PC-3 (cell line): ENCODE measurements at regions of chr3 and their contacts with region 1.

Region 1: DNA sequence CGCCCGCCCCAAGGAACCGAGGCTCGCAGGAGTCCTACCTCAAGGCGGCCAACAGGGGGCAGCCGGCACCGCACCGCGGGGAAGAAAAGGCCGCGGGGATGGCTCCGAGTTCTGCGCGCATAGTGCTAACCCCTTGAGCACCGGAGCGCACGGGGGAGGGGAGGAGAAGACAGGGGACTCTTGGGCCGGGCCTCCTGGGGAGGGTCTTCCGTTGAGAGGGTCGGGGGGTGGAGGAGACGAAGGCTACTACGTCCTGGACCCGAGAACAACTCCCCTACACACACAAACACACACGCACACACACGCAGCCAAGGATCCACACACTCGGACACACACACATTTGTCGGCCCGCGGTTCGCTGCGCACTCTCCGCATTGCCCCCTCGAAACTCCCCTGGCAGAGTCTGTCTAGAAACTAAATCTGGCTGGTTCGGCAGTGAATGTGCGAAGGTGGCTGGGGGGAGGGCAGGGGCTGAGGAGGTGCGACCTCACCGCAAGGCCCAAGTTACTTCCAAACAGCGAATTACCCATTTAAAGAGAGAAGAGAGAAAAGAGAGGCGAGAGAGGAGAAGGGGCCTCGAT is 1.8 kb downstream of the WNT5A start:
- DNase-seq: peak; percentile 82
- ATAC-seq: peak; percentile 33
- H3K4me3 ChIP-seq: peak overlapping the region; percentile 90
- H3K27ac ChIP-seq: peak overlapping the region; percentile 84
- H3K4me1 ChIP-seq: peaks cover 24% of the 10 kb centered on the region
- H3K27me3 ChIP-seq: no peaks in the 10 kb centered on the region
- CTCF ChIP-seq: peak; percentile 46

Region 2: DNA sequence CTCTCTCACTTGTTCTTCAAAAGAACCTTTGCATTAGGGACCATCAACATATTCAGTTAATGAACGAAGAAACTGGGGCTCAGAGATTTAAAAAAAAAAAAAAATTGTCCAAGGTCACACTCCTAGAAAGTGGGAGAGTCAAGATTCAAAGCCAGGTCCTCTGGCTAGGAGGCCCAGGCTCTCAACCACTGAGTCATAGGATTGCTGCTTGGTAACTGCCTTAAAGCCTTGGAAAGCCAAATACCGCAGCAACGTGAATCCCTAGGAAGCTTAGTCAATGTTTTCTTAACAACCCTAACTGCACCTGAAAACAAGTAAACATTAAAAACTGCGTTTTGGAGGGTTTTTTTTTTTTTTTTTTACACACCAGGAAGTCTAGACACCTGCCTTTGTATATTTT is 154.9 kb before region 1 on chr3:
- CTCF ChIA-PET with region 1: no interaction called
- POLR2A ChIA-PET with region 1: no interaction called
- intact Hi-C with region 1: loop called (anchors 2 kb)
- DNase-seq: peak; percentile 94
- ATAC-seq: peak; percentile 97
- H3K4me3 ChIP-seq: peak overlapping the region; percentile 17; the same call in 1 of the 2 replicates
- H3K27ac ChIP-seq: peak overlapping the region; percentile 79
- H3K4me1 ChIP-seq: peaks cover 19% of the 10 kb centered on the region
- H3K27me3 ChIP-seq: no peaks in the 10 kb centered on the region
- CTCF ChIP-seq: no peak

Region 3: GRCh38 chr3:55511895-55512570 is 26.7 kb after region 1 on chr3:
- CTCF ChIA-PET with region 1: interaction called, 4 read pairs
- POLR2A ChIA-PET with region 1: no interaction called
- intact Hi-C with region 1: loop called (anchors 1 kb)
- DNase-seq: peak; percentile 78
- ATAC-seq: peak; percentile 90
- H3K4me3 ChIP-seq: peak overlapping the region; percentile 47
- H3K27ac ChIP-seq: peak overlapping the region; percentile 61
- H3K4me1 ChIP-seq: peaks cover 24% of the 10 kb centered on the region
- H3K27me3 ChIP-seq: no peaks in the 10 kb centered on the region
- CTCF ChIP-seq: no peak

Region 4: DNA sequence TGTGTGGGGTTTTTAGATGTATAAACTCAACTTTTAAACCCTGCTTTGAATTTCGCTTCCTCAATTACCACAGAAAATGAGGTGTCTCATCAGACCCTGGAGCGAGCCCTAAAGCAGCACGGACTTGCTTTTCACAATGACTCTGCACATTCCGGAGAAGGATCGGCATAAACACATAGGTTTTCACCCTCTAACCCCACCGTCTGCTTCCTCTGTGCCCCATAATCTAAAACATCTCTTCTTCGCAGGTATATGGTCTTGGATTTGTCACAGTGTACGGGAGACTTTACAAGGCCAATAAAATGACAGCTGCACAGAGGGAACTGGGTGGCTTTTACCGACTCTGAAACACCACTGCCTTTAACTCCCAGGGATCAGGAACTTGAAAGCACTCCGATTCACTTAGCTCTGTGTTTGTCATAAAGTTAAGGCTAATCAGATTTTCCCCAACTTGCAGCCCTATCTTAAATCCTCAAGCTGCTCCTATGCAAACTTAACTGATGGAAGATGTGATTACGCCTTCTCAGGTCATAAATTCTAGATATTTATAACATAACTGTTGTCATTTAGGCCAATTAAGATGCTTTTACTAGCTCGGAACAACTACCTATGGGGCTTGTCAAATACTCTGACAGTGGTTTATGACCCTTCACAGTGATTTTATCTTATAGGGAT is 135.2 kb after region 1 on chr3:
- CTCF ChIA-PET with region 1: no interaction called
- POLR2A ChIA-PET with region 1: no interaction called
- intact Hi-C with region 1: loop called (anchors 1 kb)
- DNase-seq: peak; percentile 55
- ATAC-seq: peak; percentile 42
- H3K4me3 ChIP-seq: peak overlapping the region; percentile 17; the same call in 1 of the 2 replicates
- H3K27ac ChIP-seq: peak overlapping the region; percentile 44
- H3K4me1 ChIP-seq: peaks cover 48% of the 10 kb centered on the region
- H3K27me3 ChIP-seq: no peaks in the 10 kb centered on the region
- CTCF ChIP-seq: no peak

Region 5: DNA sequence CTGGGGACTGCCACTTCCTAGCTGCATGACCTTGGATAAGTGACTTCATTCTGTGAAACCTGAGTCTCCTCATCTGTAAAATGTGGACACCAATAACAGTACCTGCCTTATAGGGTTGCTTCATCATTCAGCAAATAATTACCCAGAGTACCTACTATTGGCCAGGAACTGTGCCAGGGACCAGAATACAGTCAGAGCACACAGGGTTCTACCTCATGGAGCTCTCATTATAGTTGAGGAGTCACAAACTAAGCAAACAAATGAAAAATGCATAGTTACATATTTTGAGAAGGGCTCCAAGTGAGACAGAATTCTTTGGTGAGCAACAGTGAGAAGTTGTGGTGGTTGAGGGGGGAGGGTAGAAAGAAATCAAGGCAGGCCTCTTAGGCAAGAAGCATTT is 310.4 kb after region 1 on chr3:
- CTCF ChIA-PET with region 1: no interaction called
- POLR2A ChIA-PET with region 1: interaction called, 3 read pairs
- intact Hi-C with region 1: loop called (anchors 5 kb)
- DNase-seq: peak; percentile 97
- ATAC-seq: peak; percentile 92
- H3K4me3 ChIP-seq: peak overlapping the region; percentile 32; the same call in 1 of the 2 replicates
- H3K27ac ChIP-seq: peak overlapping the region; percentile 93
- H3K4me1 ChIP-seq: peaks cover 42% of the 10 kb centered on the region
- H3K27me3 ChIP-seq: no peaks in the 10 kb centered on the region
- CTCF ChIP-seq: no peak

Region 6: GRCh38 chr3:57094575-57094974 is 1609.3 kb after region 1 on chr3:
- CTCF ChIA-PET with region 1: no interaction called
- POLR2A ChIA-PET with region 1: no interaction called
- intact Hi-C with region 1: no loop called
- DNase-seq: no peak
- ATAC-seq: no peak
- H3K4me3 ChIP-seq: no peak overlapping the region
- H3K27ac ChIP-seq: no peak overlapping the region
- H3K4me1 ChIP-seq: peaks cover 15% of the 10 kb centered on the region
- H3K27me3 ChIP-seq: no peaks in the 10 kb centered on the region
- CTCF ChIP-seq: no peak